Ovary (tissue), 10 donors: ENCODE measurements at regions of chrX and their contacts with region 1.

Region 1: GRCh38 chrX:989959-990510 is 222.4 kb downstream of the CRLF2 start:
- DNase-seq: peak; percentile 87 to 93 (median 89)
- H3K4me3 ChIP-seq: peak overlapping the region; percentile 27
- H3K27ac ChIP-seq: peak overlapping the region; percentile 45 to 57
- H3K4me1 ChIP-seq: no peaks in the 10 kb centered on the region
- H3K27me3 ChIP-seq: no peaks in the 10 kb centered on the region
- CTCF ChIP-seq: no peak
- EP300 ChIP-seq: peak; percentile 51
- POLR2A ChIP-seq: no peak

Region 2: DNA sequence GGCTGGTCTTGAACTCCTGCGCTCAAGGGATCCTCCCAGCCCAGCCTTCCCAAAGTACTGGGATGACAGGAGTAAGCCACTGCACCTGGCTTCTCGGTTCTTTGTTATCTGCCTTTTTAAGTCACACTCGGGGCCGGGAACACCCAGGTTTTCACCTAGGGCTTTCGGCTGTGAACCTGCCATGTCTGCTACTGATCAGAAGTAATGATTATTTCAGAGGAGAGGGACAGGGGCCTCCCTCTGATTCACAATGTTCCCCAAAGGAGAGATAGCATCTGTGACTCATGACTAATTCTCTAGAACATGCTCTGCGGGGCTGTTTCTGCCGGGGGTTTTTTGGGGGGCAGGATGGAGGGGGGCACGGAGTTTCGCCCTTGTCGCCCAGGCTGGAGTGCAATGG is 195.5 kb after region 1 on chrX:
- intact Hi-C with region 1: no loop called
- DNase-seq: no peak
- H3K4me3 ChIP-seq: no peak overlapping the region
- H3K27ac ChIP-seq: no peak overlapping the region
- H3K4me1 ChIP-seq: no peaks in the 10 kb centered on the region
- H3K27me3 ChIP-seq: no peaks in the 10 kb centered on the region
- CTCF ChIP-seq: no peak
- EP300 ChIP-seq: no peak
- POLR2A ChIP-seq: no peak

Region 3: DNA sequence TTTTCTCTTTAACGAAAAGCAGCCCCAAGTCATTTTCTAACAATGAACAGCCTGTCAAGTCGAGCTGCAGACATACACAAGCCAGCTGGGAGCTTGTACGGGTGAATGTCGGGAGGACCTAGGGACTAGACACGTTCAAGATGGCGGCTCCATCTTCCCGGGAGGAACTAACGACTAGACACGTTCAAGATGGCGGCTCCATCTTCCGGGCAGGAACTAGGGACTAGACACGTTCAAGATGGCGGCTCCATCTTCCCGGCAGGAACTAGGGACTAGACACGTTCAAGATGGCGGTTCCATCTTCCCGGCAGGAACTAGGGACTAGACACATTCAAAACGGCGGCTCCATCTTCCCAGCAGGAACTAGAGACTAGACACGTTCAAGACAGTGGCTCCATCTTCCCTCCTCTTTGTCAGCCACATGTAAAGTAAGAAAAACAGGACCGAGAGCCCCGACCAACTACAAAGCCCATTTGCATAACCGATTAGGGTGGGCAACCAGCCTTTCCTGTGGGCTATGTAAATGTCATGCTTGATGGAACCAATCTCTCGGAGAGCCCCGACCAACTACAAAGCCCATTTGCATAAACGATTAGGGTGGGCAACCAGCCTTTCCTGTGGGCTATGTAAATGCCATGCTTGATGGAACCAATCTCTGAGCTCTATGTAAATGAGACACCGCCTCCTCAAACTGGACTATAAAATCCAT is 1335.2 kb after region 1 on chrX:
- intact Hi-C with region 1: loop called in 1 of 4 experiments (anchors 10 kb)
- DNase-seq: peak; percentile 81 to 91 (median 87)
- H3K4me3 ChIP-seq: peak overlapping the region; percentile 49
- H3K27ac ChIP-seq: peak overlapping the region in 1 of 2 donors; percentile 83
- H3K4me1 ChIP-seq: no peaks in the 10 kb centered on the region
- H3K27me3 ChIP-seq: no peaks in the 10 kb centered on the region
- CTCF ChIP-seq: no peak
- EP300 ChIP-seq: no peak
- POLR2A ChIP-seq: no peak

Region 4: GRCh38 chrX:2627272-2627867 is 1637.3 kb after region 1 on chrX:
- intact Hi-C with region 1: loop called in 1 of 4 experiments (anchors 10 kb)
- DNase-seq: peak in 2 of 5 donors; percentile 35 to 38
- H3K4me3 ChIP-seq: no peak overlapping the region
- H3K27ac ChIP-seq: no peak overlapping the region
- H3K4me1 ChIP-seq: no peaks in the 10 kb centered on the region
- H3K27me3 ChIP-seq: no peaks in the 10 kb centered on the region
- CTCF ChIP-seq: peak in 2 of 3 donors; percentile 13 to 21
- EP300 ChIP-seq: no peak
- POLR2A ChIP-seq: no peak